ENCODE measurements at regions of chr2 and their contacts with region 1.

Region 1: GRCh38 chr2:216632952-216633615 is at the start of gene IGFBP2:
- DNase-seq: peak; percentile 28
- H3K4me3 Mint-ChIP-seq: peak within 1 kb of the TSS; percentile 82
- H3K27ac Mint-ChIP-seq: peak within 1 kb of the TSS; percentile 35
- H3K4me1 Mint-ChIP-seq: peaks cover 32% of the 10 kb centered on the region
- H3K27me3 Mint-ChIP-seq: peaks cover 69% of the 10 kb centered on the region
- total RNA-seq, gene IGFBP2: 30.1 and 32.5 TPM in 2 replicates

Region 2: GRCh38 chr2:216606551-216607276 is 26.4 kb before region 1 on chr2:
- intact Hi-C with region 1: loop called (anchors 1 kb)
- DNase-seq: peak; percentile 46
- H3K4me3 Mint-ChIP-seq: peak overlapping the region; percentile 82
- H3K27ac Mint-ChIP-seq: peak overlapping the region; percentile 86
- H3K4me1 Mint-ChIP-seq: peaks cover 32% of the 10 kb centered on the region
- H3K27me3 Mint-ChIP-seq: no peaks in the 10 kb centered on the region